Activated CD4-positive, alpha-beta T cell treated with anti-CD3 and anti-CD28 coated beads, Interleukin-2, amount 10 ng/mL, durations not matched to agents 24 days and 14 days (primary cell): ENCODE measurements at regions of chr7 and their contacts with region 1.

Region 1: GRCh38 chr7:36723951-36724664 is at the start of gene AOAH:
- DNase-seq: peak; percentile 95
- H3K4me3 Mint-ChIP-seq: peak within 1 kb of the TSS; percentile 94
- H3K27ac Mint-ChIP-seq: peak within 1 kb of the TSS; percentile 97
- H3K4me1 Mint-ChIP-seq: peaks cover 74% of the 10 kb centered on the region
- H3K27me3 Mint-ChIP-seq: no peaks in the 10 kb centered on the region
- total RNA-seq, gene AOAH: 17.6 and 17.8 TPM in 2 replicates

Region 2: DNA sequence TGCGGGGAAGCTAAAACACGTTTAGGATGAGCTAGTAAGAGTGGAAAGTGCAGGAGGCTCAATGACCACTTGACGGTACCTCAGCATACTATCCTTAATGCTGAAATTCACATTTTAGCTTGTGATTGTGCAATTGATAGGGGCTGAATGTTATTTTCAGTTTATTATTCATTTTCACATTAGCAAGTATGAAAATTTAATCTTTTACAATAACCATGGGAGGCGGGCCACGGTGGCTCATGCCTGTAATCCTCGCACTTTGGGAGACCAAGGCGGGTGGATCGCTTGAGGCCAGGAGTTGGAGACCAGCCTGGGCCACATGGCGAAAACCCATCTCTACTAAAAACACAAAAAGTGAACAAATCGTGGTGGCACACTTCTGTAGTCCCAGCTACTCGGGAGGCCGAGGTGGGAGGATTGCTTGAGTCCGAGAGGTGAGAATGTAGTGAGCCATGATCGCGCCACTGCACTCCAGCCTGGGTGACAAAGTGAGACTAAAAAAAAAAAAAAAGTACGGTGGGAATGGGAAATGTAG is 356.5 kb before region 1 on chr7:
- intact Hi-C with region 1: no loop called
- DNase-seq: no peak
- H3K4me3 Mint-ChIP-seq: peak overlapping the region; percentile 91
- H3K27ac Mint-ChIP-seq: no peak overlapping the region
- H3K4me1 Mint-ChIP-seq: peaks cover 4% of the 10 kb centered on the region
- H3K27me3 Mint-ChIP-seq: peaks cover 35% of the 10 kb centered on the region

Region 3: GRCh38 chr7:36686499-36686898 is 37.6 kb before region 1 on chr7:
- intact Hi-C with region 1: loop called (anchors 2 kb)
- DNase-seq: peak; percentile 73
- H3K4me3 Mint-ChIP-seq: peak overlapping the region; percentile 41
- H3K27ac Mint-ChIP-seq: peak overlapping the region; percentile 91
- H3K4me1 Mint-ChIP-seq: peaks cover 67% of the 10 kb centered on the region
- H3K27me3 Mint-ChIP-seq: no peaks in the 10 kb centered on the region

Region 4: DNA sequence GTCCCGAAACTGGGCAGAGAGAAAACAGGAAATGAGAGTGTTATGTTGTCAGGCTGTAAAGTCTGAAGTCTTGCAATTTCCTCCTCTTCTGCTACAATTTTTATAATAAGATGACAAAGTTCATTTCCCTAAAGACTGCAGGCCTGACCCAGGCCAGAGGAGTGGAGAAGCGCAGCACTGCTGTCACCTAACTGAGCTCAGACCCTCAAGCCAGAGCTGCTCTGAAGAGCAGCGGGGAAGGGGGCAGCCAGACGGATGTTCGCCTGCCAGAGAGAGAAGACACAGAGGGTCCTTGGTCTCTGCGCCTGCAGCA is 12.7 kb after region 1 on chr7:
- intact Hi-C with region 1: loop called (anchors 1 kb)
- DNase-seq: peak; percentile 63
- H3K4me3 Mint-ChIP-seq: peak overlapping the region; percentile 16
- H3K27ac Mint-ChIP-seq: peak overlapping the region; percentile 38
- H3K4me1 Mint-ChIP-seq: peaks cover 30% of the 10 kb centered on the region
- H3K27me3 Mint-ChIP-seq: no peaks in the 10 kb centered on the region

Region 5: GRCh38 chr7:36784991-36785940 is 61.2 kb after region 1 on chr7:
- intact Hi-C with region 1: loop called (anchors 2 kb)
- DNase-seq: peak; percentile 88
- H3K4me3 Mint-ChIP-seq: peak overlapping the region; percentile 68
- H3K27ac Mint-ChIP-seq: peak overlapping the region; percentile 88
- H3K4me1 Mint-ChIP-seq: peaks cover 72% of the 10 kb centered on the region
- H3K27me3 Mint-ChIP-seq: no peaks in the 10 kb centered on the region

Region 6: DNA sequence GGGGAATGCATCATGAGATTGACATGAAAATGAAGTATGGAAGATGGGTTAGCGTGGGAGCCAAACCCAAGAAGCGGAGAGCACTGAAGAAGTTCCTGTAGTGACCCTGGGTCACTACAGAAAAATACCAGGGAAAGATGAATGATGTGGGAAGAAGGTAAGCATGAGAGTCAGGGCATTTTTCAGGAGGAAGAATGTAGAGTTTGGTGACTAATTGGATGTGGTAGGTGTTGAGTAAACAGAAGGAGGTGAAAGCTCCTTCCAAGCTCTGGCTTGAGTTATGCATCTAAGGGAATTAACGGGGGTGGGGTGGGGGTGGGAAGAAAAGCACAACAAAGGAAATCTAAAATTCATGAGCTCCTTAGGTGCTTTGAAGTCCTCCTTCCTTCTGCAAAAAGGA is 238.3 kb after region 1 on chr7:
- intact Hi-C with region 1: loop called (anchors 5 kb)
- DNase-seq: no peak
- H3K4me3 Mint-ChIP-seq: no peak overlapping the region
- H3K27ac Mint-ChIP-seq: peak overlapping the region; percentile 64
- H3K4me1 Mint-ChIP-seq: peaks cover 37% of the 10 kb centered on the region
- H3K27me3 Mint-ChIP-seq: no peaks in the 10 kb centered on the region